Activated CD8-positive, alpha-beta T cell treated with anti-CD3 and anti-CD28 coated beads for 36 hours (primary cell): ENCODE measurements at regions of chr15 and their contacts with region 1.

Region 1: DNA sequence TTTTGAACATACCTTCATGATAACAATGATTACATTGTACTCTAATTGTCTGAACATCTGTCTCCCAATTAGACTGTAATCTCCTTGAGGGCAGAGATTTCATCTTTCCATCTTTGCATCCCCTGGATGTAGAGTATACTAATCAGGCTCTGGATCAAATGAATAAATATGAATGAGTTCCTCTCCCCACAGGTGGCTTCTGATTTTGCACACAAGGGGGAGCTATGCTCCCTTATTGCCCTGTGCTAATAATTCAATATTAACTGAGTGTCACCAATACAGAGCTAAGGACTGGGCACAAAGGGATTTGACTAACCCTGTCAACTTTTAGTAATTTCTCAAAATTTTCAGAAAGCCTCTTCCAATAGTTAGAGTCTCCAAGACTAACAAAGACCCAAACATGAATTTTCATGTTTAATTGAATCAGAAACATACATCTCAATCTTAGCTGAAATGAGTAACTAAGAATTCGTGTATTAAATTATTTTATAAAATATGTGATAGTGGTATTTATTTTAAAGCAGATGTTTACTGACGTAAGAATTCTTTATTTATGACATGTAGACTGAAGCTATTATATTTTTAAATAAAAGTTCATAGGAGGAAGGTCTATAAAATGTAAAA is 3.0 kb downstream of the DUOXA1 start:
- DNase-seq: peak; percentile 53
- ATAC-seq: peak; percentile 55
- H3K4me3 Mint-ChIP-seq: no peak overlapping the region
- H3K27ac Mint-ChIP-seq: no peak overlapping the region
- H3K4me1 Mint-ChIP-seq: no peaks in the 10 kb centered on the region
- H3K27me3 Mint-ChIP-seq: peaks cover 50% of the 10 kb centered on the region
- CTCF ChIP-seq: peak; percentile 68

Region 2: DNA sequence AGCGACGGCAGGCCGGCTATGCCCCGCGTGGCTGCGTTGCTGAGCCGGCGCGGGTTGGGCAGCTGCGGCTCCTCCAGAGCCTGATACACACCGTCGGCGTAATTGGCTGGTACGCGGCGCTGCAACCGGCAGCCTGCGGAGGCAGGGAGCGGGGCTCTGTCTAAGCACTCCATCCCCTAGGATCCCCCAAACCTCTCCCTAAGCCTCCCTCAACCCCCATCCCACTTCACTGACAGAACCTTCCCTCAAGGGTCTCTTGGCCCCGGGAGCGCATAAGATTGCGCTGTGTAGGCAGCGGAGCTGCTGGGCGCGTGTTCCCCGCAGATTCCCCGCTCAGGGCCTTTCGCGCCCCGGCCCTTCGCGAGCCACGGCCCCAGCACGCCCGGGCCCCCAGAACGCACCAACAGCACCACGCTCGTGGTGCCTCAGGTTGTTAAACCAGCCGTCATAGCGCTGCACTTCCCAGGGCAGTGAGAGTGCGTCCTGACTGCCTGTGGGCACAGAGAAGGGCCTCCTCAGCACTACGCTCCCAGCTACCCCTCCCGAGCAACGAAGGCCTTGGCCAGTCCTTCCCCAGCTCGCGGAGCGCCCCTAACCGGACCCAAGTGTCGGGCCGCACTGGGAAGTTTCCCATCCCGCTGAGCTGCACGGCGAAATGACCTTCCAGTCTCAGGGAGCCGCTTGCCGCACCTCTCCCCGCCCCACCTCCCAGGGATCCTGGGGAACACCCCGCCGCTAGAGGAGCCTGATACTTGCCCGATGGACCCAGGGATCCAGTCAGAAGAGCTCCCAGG is 13.9 kb before region 1 on chr15:
- CTCF ChIA-PET with region 1: interaction called, 48 read pairs
- POLR2A ChIA-PET with region 1: no interaction called
- intact Hi-C with region 1: no loop called
- DNase-seq: no peak
- ATAC-seq: no peak
- H3K4me3 Mint-ChIP-seq: peak overlapping the region; percentile 7
- H3K27ac Mint-ChIP-seq: no peak overlapping the region
- H3K4me1 Mint-ChIP-seq: peaks cover 46% of the 10 kb centered on the region
- H3K27me3 Mint-ChIP-seq: peaks cover 79% of the 10 kb centered on the region
- CTCF ChIP-seq: no peak

Region 3: DNA sequence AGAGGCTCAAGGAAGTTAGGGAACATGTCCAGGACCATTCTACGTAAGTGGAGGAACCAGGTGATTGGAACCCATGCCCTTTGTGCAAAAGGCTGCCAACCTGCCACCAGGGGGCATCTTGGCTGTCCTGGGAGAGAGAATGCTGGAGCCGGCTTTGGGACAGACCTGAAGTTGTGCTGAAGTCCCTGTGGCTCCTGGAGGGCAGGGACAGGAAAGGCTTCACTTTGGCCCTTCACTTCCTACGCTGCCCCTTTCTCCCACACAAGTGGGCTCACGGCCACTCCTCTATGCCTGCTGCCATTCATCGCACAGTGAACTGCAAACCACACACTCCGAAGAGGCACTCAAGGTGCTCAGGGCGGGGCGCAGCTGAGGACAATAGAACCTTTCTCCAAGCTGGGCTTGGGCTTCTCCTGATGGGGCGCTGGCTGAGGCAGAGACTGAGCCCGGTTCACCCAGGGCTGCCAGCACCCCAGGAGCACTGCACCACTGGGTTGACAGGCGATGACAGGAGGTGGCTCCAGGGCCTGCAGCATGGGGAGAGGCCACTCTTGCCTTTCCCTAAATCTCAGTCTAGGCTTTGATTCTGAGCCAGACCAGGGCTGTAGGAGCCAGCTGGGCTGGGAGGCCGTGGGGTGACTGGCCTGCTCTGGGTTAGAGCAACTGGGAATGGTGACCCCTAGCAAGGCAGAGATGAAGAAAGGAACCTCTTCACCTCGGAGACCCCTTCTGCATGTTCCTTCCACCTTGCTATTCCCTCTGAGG is 52.8 kb after region 1 on chr15:
- CTCF ChIA-PET with region 1: no interaction called
- POLR2A ChIA-PET with region 1: no interaction called
- intact Hi-C with region 1: no loop called
- DNase-seq: peak; percentile 59
- ATAC-seq: peak; percentile 59
- H3K4me3 Mint-ChIP-seq: no peak overlapping the region
- H3K27ac Mint-ChIP-seq: no peak overlapping the region
- H3K4me1 Mint-ChIP-seq: peaks cover 19% of the 10 kb centered on the region
- H3K27me3 Mint-ChIP-seq: no peaks in the 10 kb centered on the region
- CTCF ChIP-seq: peak; percentile 65